SK-N-SH (cell line): ENCODE measurements at regions of chr6 and their contacts with region 1.

Region 1: GRCh38 chr6:3742426-3743344 is 8.8 kb downstream of the PXDC1 start:
- DNase-seq: peak; percentile 84
- H3K4me3 ChIP-seq: peak overlapping the region; percentile 12 to 48; a peak in 2 of 4 replicates
- H3K27ac ChIP-seq: peak overlapping the region in 1 of 2 experiments; percentile 31; a peak in 2 of 4 replicates
- H3K4me1 ChIP-seq: peaks cover 5 to 20% of the 10 kb centered on the region in 2 experiments; a peak in 2 of 4 replicates
- H3K27me3 ChIP-seq: no peaks in the 10 kb centered on the region
- CTCF ChIP-seq: peak; percentile 95
- EP300 ChIP-seq: no peak
- RAD21 ChIP-seq: peak; percentile 93

Region 2: DNA sequence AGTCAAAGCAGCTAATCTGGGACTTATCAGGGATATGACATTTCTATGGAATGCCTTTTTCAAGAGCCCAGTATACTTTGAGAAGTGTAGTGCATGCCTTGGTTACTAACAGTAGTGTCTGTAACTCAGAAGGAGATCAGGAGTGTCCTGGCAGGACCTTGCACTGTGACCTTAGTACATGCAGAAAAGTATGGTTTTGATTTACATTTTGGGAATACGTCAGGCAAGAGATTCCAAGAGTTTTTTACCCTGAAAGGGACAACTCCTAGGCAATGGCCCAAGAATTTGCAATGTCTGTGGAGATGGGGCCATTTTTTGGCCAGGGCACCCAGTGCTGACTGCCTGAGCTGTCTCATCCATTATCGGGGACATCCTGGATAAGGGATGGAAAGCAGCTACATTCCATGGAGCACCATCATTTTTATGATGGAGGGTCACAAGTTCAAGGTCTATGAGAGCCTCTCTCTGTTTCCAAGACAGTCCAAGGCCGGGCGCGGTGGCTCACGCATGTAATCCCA is 186.7 kb after region 1 on chr6:
- CTCF ChIA-PET with region 1: interaction called, 20 read pairs
- POLR2A ChIA-PET with region 1: no interaction called
- DNase-seq: no peak
- H3K4me3 ChIP-seq: no peak overlapping the region
- H3K27ac ChIP-seq: peak overlapping the region; percentile 58 to 84; a peak in 3 of 4 replicates
- H3K4me1 ChIP-seq: peaks cover 2 to 14% of the 10 kb centered on the region in 2 experiments; a peak in 2 of 4 replicates
- H3K27me3 ChIP-seq: no peaks in the 10 kb centered on the region
- CTCF ChIP-seq: no peak
- EP300 ChIP-seq: peak in 1 of 2 experiments; percentile 87; a peak in 2 of 4 replicates
- RAD21 ChIP-seq: no peak

Region 3: GRCh38 chr6:3990692-3991501 is 248.2 kb after region 1 on chr6:
- CTCF ChIA-PET with region 1: interaction called, 53 read pairs
- POLR2A ChIA-PET with region 1: no interaction called
- DNase-seq: peak; percentile 82
- H3K4me3 ChIP-seq: peak overlapping the region in 1 of 2 experiments; percentile 2; a peak in 1 of 4 replicates
- H3K27ac ChIP-seq: peak overlapping the region in 1 of 2 experiments; percentile 14; a peak in 1 of 4 replicates
- H3K4me1 ChIP-seq: peaks cover 14% of the 10 kb centered on the region in 2 experiments; a peak in 2 of 4 replicates
- H3K27me3 ChIP-seq: no peaks in the 10 kb centered on the region
- CTCF ChIP-seq: peak; percentile 96
- EP300 ChIP-seq: no peak
- RAD21 ChIP-seq: peak; percentile 91

Region 4: GRCh38 chr6:4008324-4009047 is 265.8 kb after region 1 on chr6:
- CTCF ChIA-PET with region 1: interaction called, 14 read pairs
- POLR2A ChIA-PET with region 1: no interaction called
- DNase-seq: peak; percentile 49
- H3K4me3 ChIP-seq: no peak overlapping the region; a peak in 1 of 4 replicates
- H3K27ac ChIP-seq: peak overlapping the region in 1 of 2 experiments; percentile 9; a peak in 1 of 4 replicates
- H3K4me1 ChIP-seq: peaks cover 0 to 6% of the 10 kb centered on the region in 2 experiments; a peak in 2 of 4 replicates
- H3K27me3 ChIP-seq: no peaks in the 10 kb centered on the region
- CTCF ChIP-seq: peak; percentile 69
- EP300 ChIP-seq: no peak
- RAD21 ChIP-seq: peak; percentile 76

Region 5: DNA sequence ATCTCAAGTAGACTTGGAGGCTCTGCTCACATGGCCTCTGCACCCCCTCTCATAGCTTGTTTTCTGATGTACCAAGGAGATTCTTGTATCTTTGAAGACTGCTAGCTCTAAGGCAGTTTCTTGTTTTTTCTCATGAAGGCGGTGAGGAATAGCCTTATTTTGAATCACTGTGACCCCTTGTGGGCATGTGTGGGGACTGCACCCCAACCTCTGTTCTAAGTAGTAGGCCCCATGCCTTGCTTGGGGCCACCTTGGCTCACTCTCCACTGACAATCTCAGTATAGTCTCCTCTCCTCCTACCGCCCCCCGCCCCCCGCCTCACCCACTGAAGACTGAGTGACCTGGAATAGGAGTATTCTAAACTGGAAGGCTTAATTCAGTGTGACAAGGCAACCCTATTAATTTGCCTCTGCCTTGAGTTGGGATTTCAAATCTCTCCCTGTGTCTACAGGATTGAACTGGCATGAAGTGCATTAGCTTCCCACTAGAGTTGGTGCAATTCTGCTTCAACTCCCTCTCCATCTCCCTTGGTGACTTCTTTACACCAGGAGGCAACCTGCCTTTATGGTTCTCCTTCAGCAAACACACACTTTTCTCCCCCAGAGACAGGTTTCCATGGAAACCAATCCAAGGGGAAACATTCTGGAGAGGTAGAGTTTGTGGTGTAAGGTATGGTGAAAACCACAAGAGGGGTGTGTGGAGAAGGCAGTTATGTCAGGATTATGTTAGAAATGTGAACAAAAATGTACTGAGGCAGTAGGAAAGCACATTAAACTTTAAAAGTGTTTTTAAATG is 468.1 kb after region 1 on chr6:
- CTCF ChIA-PET with region 1: interaction called, 10 read pairs
- POLR2A ChIA-PET with region 1: no interaction called
- DNase-seq: peak; percentile 50
- H3K4me3 ChIP-seq: no peak overlapping the region; a peak in 1 of 4 replicates
- H3K27ac ChIP-seq: no peak overlapping the region
- H3K4me1 ChIP-seq: no peaks in the 10 kb centered on the region
- H3K27me3 ChIP-seq: no peaks in the 10 kb centered on the region; the same call in 1 of the 2 replicates
- CTCF ChIP-seq: peak; percentile 71
- EP300 ChIP-seq: no peak
- RAD21 ChIP-seq: peak; percentile 65